ENCODE measurements at regions of chr2 and their contacts with region 1.

Region 1: DNA sequence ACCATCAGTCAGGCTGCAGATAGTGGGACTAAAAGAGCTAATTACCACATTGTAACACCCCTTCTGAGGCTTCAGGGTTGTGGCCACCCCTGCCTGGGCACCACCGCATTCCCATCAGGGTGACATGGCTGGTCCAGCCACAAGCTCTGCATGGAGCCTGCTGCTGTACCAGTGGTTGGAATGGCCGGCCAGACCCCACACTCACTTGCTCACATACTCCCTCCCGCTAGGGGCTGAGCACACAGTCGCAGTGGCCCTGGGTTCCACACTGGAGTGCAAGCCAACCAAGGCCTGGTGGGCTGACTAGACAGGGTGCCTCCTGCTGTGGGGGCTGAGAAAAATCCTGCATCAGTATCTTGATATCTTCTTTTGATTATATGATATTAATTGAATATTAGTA is 182.8 kb upstream of the STK17B start:
- DNase-seq: no peak
- ATAC-seq: no peak
- H3K4me3 ChIP-seq: no peak overlapping the region
- H3K4me1 ChIP-seq: no peaks in the 10 kb centered on the region
- CTCF ChIP-seq: no peak

Region 2: GRCh38 chr2:194539425-194539824 is 1814.8 kb before region 1 on chr2:
- intact Hi-C with region 1: no loop called
- DNase-seq: no peak
- ATAC-seq: no peak
- H3K4me3 ChIP-seq: no peak overlapping the region
- H3K4me1 ChIP-seq: no peaks in the 10 kb centered on the region
- CTCF ChIP-seq: no peak

Region 3: GRCh38 chr2:196101325-196101991 is 252.7 kb before region 1 on chr2:
- intact Hi-C with region 1: no loop called
- DNase-seq: no peak
- ATAC-seq: peak; percentile 87
- H3K4me3 ChIP-seq: no peak overlapping the region
- H3K4me1 ChIP-seq: peaks cover 3% of the 10 kb centered on the region
- CTCF ChIP-seq: no peak

Region 4: DNA sequence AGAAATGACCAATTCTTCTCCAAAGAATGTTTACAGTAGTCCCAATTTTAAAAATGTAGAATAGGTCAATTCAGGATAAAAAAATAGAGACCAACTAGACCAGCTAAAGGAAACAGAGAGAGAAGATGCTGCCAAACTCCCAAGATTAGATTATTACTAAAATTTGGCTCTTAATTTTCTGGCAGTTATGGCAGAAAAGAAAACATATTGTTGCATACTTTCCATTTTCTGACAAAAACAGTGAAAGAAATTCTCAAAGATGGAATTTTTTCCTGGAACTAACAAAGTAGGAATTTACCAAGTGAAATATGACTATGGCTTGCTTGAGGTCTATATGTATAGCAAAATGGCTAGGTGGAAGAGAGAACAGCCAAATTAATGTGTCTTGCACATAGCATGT is 44.5 kb before region 1 on chr2:
- intact Hi-C with region 1: loop called in 1 of 2 experiments (anchors 5 kb)
- DNase-seq: no peak
- ATAC-seq: no peak
- H3K4me3 ChIP-seq: no peak overlapping the region
- H3K4me1 ChIP-seq: no peaks in the 10 kb centered on the region
- CTCF ChIP-seq: no peak

Region 5: GRCh38 chr2:197191177-197191939 is 837.2 kb after region 1 on chr2:
- intact Hi-C with region 1: no loop called
- DNase-seq: no peak
- ATAC-seq: peak; percentile 76
- H3K4me3 ChIP-seq: no peak overlapping the region
- H3K4me1 ChIP-seq: peaks cover 2% of the 10 kb centered on the region
- CTCF ChIP-seq: peak; percentile 40

Measured in mucosa of descending colon (tissue), 3 donors.